Esophagus muscularis mucosa (tissue), 4 donors: ENCODE measurements at regions of chr20 and their contacts with region 1.

Region 1: GRCh38 chr20:38229376-38230252 is 30.9 kb downstream of the KIAA1755 start:
- DNase-seq: no peak
- H3K4me3 ChIP-seq: no peak overlapping the region
- H3K27ac ChIP-seq: no peak overlapping the region
- H3K4me1 ChIP-seq: peaks cover 0 to 15% (median 9%) of the 10 kb centered on the region in 4 donors
- H3K27me3 ChIP-seq: no peaks in the 10 kb centered on the region
- CTCF ChIP-seq: peak in 2 of 3 experiments; percentile 28 to 41
- EP300 ChIP-seq: no peak
- POLR2A ChIP-seq: no peak

Region 2: GRCh38 chr20:38311100-38311890 is 81.7 kb after region 1 on chr20:
- intact Hi-C with region 1: loop called (anchors 5 kb)
- DNase-seq: no peak
- H3K4me3 ChIP-seq: no peak overlapping the region
- H3K27ac ChIP-seq: no peak overlapping the region
- H3K4me1 ChIP-seq: no peaks in the 10 kb centered on the region
- H3K27me3 ChIP-seq: peaks cover 0 to 14% (median 0%) of the 10 kb centered on the region in 4 donors
- CTCF ChIP-seq: no peak
- EP300 ChIP-seq: no peak
- POLR2A ChIP-seq: no peak